Activated CD8-positive, alpha-beta T cell treated with anti-CD3 and anti-CD28 coated beads for 36 hours (primary cell): ENCODE measurements at regions of chr3 and their contacts with region 1.

Region 1: DNA sequence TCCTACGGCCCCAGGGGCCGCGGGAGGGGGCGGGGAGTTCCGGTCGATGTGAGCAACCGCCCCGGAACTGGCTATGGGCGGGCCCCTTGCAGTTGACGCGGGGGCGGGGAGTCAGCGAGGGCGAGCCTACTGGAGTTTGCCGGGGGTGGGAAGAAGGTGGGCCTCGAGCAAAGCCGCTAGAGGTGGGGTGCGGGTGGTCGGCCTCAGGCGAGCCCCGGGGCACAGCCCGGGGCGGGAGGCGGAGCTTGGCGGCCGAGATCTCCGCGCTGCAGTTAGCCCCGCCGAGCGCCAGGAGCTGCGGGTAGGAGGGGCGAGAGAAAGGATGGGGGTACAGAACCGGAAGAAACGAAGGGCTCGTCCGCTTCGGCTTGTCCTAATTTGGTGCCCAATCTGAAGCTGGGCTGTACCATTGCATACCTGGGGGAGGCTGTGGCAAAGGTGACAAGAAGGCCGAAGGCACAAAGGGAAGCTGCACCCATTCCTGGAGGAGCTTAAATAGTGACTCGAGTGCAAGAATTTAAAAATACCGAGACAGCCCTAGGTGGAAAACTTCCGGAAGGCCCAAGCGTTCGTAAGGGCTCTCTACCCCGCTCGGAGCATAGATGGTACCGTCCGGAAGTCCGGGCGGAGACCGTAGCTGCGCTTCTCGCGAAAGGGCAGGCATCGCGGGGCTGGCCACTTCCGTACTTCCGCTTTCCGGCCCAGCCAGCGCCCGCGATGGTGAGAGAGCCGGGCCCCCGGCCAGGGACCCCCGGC is at the starts of genes ARPC4 and TADA3:
- DNase-seq: peak; percentile 95
- ATAC-seq: peak; percentile 88
- H3K4me3 Mint-ChIP-seq: peak within 1 kb of the TSS; percentile 88
- H3K27ac Mint-ChIP-seq: peak within 1 kb of the TSS; percentile 100
- H3K4me1 Mint-ChIP-seq: peaks cover 53% of the 10 kb centered on the region
- H3K27me3 Mint-ChIP-seq: no peaks in the 10 kb centered on the region
- CTCF ChIP-seq: no peak
- total RNA-seq, gene ARPC4: 205 to 208 TPM
- total RNA-seq, gene TADA3: 57.5 to 58.3 TPM

Region 2: GRCh38 chr3:9542182-9542581 is 250.4 kb before region 1 on chr3:
- CTCF ChIA-PET with region 1: no interaction called
- POLR2A ChIA-PET with region 1: no interaction called
- intact Hi-C with region 1: no loop called
- DNase-seq: no peak
- ATAC-seq: no peak
- H3K4me3 Mint-ChIP-seq: no peak overlapping the region
- H3K27ac Mint-ChIP-seq: no peak overlapping the region
- H3K4me1 Mint-ChIP-seq: no peaks in the 10 kb centered on the region
- H3K27me3 Mint-ChIP-seq: peaks cover 5% of the 10 kb centered on the region
- CTCF ChIP-seq: no peak

Region 3: GRCh38 chr3:9749645-9750555 is 42.7 kb before region 1 on chr3 and contains the start of gene OGG1:
- CTCF ChIA-PET with region 1: no interaction called
- POLR2A ChIA-PET with region 1: interaction called, 14 read pairs
- intact Hi-C with region 1: loop called (anchors 2 kb)
- DNase-seq: peak; percentile 100
- ATAC-seq: peak; percentile 89
- H3K4me3 Mint-ChIP-seq: peak within 1 kb of the TSS; percentile 88
- H3K27ac Mint-ChIP-seq: peak within 1 kb of the TSS; percentile 94
- H3K4me1 Mint-ChIP-seq: peaks cover 45% of the 10 kb centered on the region
- H3K27me3 Mint-ChIP-seq: no peaks in the 10 kb centered on the region
- CTCF ChIP-seq: no peak
- total RNA-seq, gene OGG1: 32.4 to 39.3 TPM

Region 4: GRCh38 chr3:9769426-9770275 is 22.9 kb before region 1 on chr3 and contains the start of gene CAMK1:
- CTCF ChIA-PET with region 1: no interaction called
- POLR2A ChIA-PET with region 1: interaction called, 11 read pairs
- intact Hi-C with region 1: no loop called
- DNase-seq: peak; percentile 80
- ATAC-seq: peak; percentile 97
- H3K4me3 Mint-ChIP-seq: peak within 1 kb of the TSS; percentile 82
- H3K27ac Mint-ChIP-seq: peak within 1 kb of the TSS; percentile 76
- H3K4me1 Mint-ChIP-seq: peaks cover 32% of the 10 kb centered on the region
- H3K27me3 Mint-ChIP-seq: no peaks in the 10 kb centered on the region
- CTCF ChIP-seq: no peak
- total RNA-seq, gene CAMK1: 41.7 to 45.7 TPM

Region 5: GRCh38 chr3:9779721-9780457 is 12.7 kb before region 1 on chr3:
- CTCF ChIA-PET with region 1: interaction called, 9 read pairs
- POLR2A ChIA-PET with region 1: interaction called, 14 read pairs
- intact Hi-C with region 1: no loop called
- DNase-seq: peak; percentile 79
- ATAC-seq: peak; percentile 57
- H3K4me3 Mint-ChIP-seq: peak overlapping the region; percentile 22
- H3K27ac Mint-ChIP-seq: peak overlapping the region; percentile 97
- H3K4me1 Mint-ChIP-seq: peaks cover 64% of the 10 kb centered on the region
- H3K27me3 Mint-ChIP-seq: no peaks in the 10 kb centered on the region
- CTCF ChIP-seq: no peak

Region 6: DNA sequence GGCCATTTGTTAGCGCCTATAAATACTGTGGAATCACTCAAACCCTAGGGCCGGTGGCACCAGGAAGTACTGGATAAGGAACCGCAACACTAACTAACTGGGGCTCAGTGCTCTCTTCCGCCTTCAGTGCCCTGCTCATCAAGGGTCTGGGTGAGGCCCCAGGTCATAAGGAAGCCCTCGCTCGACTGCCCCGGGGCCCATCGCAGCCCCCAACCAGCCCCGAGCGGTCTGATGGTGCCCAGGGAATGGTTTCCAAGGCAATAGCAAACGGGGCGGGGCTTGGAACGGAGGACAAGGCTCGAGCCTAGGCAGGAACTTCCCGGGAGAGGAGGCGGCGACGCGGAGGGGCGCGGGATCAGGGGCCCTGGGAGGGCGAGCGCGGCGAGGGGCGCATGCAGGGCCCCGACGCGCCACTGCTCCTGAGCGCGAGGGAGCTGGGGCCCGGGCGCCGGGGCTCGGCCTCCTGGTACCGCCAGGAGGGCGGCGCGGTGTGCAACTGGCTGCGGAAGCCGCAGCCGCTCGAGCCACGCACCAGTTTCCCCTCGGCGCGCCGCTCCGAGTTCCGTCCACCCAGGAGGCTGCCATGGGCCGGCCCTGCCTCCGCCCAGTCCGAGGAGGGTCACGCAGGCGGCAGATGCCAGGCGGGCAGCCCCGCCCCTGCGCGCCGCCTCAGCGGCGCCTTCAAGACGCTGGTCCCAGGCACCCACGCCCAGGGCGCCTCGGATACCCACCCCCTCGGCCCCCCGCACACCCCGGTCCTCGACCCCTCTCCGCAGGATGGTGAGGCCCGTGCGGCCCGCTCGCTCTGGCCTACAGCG is 17.2 kb after region 1 on chr3 and contains the start of gene TTLL3:
- CTCF ChIA-PET with region 1: interaction called, 12 read pairs
- POLR2A ChIA-PET with region 1: interaction called, 15 read pairs
- intact Hi-C with region 1: no loop called
- DNase-seq: peak; percentile 40
- ATAC-seq: peak; percentile 28
- H3K4me3 Mint-ChIP-seq: peak within 1 kb of the TSS; percentile 75
- H3K27ac Mint-ChIP-seq: peak within 1 kb of the TSS; percentile 90
- H3K4me1 Mint-ChIP-seq: peaks cover 42% of the 10 kb centered on the region
- H3K27me3 Mint-ChIP-seq: no peaks in the 10 kb centered on the region
- CTCF ChIP-seq: no peak
- total RNA-seq, gene TTLL3: 52.4 to 61.1 TPM

Region 7: DNA sequence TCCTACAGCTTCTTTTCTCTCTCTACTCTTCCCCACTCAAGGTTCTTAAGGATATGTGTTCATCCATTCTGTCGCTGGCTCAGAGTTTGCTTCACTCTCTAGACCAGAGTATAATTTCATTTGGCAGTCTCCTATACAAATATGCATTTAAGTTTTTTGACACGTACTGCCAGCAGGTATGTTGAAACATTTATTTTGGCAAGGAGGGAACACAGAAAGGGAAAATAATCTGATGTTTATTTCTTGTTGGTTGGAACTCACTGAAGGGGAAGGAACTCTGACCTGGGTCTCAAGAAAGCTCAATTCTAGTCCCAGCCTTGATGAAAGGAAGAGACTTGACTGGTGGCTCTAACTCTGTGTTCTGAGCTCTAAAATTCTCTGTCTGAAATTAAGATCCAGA is 255.3 kb after region 1 on chr3:
- CTCF ChIA-PET with region 1: no interaction called
- POLR2A ChIA-PET with region 1: no interaction called
- intact Hi-C with region 1: no loop called
- DNase-seq: no peak
- ATAC-seq: no peak
- H3K4me3 Mint-ChIP-seq: no peak overlapping the region
- H3K27ac Mint-ChIP-seq: no peak overlapping the region
- H3K4me1 Mint-ChIP-seq: no peaks in the 10 kb centered on the region
- H3K27me3 Mint-ChIP-seq: no peaks in the 10 kb centered on the region
- CTCF ChIP-seq: no peak